Right cardiac atrium (tissue), 5 donors: ENCODE measurements at regions of chr17 and their contacts with region 1.

Region 1: DNA sequence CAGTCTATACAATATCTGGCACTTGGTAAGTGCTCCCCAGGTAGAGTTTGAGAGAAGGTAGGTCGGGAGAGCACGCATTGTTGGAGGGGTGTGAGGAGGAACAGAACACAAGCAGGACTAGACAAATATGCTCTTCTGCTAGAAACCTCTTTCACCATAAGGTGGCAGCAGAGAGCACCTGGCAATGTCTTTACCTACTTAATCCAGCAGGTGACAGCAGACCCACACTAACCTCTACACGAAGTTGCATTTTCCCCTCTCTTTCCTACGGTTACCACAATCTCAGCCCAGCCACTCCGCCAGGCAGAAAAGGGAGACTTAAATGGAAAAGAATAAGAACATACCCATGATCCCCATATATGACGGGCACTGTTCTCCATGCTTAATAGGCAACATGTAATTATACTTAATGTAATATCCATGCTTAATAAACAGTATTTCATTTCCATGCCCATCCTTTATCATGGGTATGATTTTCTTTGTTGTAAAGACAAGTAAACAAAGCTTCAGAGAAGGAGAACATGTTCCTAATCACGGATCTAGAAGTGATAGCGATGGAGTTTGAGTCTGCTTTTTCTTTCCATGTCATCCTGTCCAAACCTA is 55.1 kb upstream of the CCL2 start:
- DNase-seq: peak; percentile 56 to 77 (median 66)
- ATAC-seq: peak; percentile 93 to 94
- H3K4me3 ChIP-seq: no peak overlapping the region
- H3K27ac ChIP-seq: no peak overlapping the region
- H3K4me1 ChIP-seq: no peaks in the 10 kb centered on the region
- H3K27me3 ChIP-seq: no peaks in the 10 kb centered on the region

Region 2: GRCh38 chr17:34361478-34362061 is 161.5 kb after region 1 on chr17:
- intact Hi-C with region 1: loop called (anchors 1 to 2 kb)
- DNase-seq: peak; percentile 88 to 96 (median 95)
- ATAC-seq: peak; percentile 86 to 88
- H3K4me3 ChIP-seq: no peak overlapping the region
- H3K27ac ChIP-seq: no peak overlapping the region
- H3K4me1 ChIP-seq: no peaks in the 10 kb centered on the region
- H3K27me3 ChIP-seq: no peaks in the 10 kb centered on the region

Region 3: DNA sequence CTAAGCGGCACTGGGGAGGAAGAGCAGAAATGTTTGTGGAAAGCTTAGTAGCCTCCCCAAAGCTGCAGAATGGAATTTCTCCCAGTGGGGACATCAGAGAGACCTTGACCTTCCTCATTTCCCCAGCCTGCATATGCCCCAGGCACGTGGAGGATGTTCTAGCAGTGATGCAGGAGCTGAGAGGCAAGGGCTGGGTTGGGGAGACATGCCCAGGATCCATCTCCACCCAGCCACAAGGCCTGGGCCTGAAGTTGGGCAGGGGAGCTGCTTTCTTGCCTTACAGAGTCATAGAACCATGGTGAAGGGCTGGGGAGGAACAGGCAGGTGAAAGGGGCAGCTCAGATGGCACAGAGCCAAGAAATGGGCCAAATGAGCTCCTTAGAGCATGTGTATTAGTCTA is 483.4 kb after region 1 on chr17:
- intact Hi-C with region 1: no loop called
- DNase-seq: no peak
- ATAC-seq: no peak
- H3K4me3 ChIP-seq: no peak overlapping the region
- H3K27ac ChIP-seq: no peak overlapping the region
- H3K4me1 ChIP-seq: no peaks in the 10 kb centered on the region
- H3K27me3 ChIP-seq: no peaks in the 10 kb centered on the region